MCF 10A (cell line): ENCODE measurements at regions of chrX and their contacts with region 1.

Region 1: GRCh38 chrX:19535476-19535875 is 20.2 kb upstream of the MAP3K15 start:
- DNase-seq: peak; percentile 34
- H3K4me3 Mint-ChIP-seq: no peak overlapping the region
- H3K27ac Mint-ChIP-seq: no peak overlapping the region
- H3K4me1 Mint-ChIP-seq: no peaks in the 10 kb centered on the region
- H3K27me3 Mint-ChIP-seq: no peaks in the 10 kb centered on the region
- CTCF ChIP-seq: peak; percentile 13

Region 2: DNA sequence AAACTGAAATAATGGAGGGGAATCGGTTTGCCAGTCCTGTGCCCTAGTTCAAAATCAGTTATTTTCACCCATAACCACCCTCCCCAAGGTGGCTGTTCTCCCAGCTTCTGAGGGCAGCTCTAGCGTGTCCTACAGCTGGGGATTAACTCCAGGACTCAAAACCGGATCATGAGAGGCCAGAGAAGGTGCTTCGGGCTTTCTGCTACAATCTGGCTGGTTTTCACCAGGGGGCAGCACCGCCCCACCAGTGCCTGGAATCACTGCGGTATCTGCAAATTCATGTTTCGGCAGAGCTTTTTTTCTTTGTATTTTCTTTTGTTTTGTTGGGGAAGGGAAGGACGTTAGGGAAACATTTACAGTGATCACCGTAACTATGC is 163.3 kb before region 1 on chrX:
- CTCF ChIA-PET with region 1: interaction called, 38 read pairs
- POLR2A ChIA-PET with region 1: interaction called, 4 read pairs
- intact Hi-C with region 1: loop called (anchors 1 kb)
- DNase-seq: peak; percentile 63
- H3K4me3 Mint-ChIP-seq: peak overlapping the region; percentile 79
- H3K27ac Mint-ChIP-seq: peak overlapping the region; percentile 35
- H3K4me1 Mint-ChIP-seq: no peaks in the 10 kb centered on the region
- H3K27me3 Mint-ChIP-seq: no peaks in the 10 kb centered on the region
- CTCF ChIP-seq: peak; percentile 59

Region 3: DNA sequence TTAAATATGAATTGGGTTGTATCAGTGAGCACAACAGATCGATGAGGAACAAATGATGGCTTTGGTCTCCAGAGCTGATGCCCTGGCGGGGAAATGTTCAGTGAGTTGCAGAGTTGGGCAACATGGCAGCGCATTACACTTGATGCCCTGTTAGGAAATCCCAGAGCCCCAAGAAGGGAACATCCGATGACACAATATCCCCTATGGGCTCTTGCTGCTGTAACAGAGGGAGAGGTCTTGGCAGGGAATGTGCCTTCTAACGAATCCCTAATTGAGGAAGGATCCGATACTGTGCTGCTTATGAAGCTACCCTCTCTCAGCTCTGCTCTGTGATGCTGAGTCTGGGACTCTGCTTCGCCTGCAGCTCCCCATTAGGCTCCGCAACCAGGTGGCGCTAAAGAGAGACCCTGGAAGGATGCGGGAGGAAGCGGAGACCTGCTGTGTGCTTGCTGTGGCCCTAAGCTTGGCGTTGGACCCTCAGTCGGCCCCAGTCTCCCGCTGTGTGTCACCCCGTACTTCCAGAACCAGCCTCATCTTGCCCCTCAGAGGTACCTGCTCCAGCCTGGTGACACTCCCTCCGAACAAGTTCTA is 152.8 kb before region 1 on chrX:
- CTCF ChIA-PET with region 1: interaction called, 14 read pairs
- POLR2A ChIA-PET with region 1: no interaction called
- intact Hi-C with region 1: no loop called
- DNase-seq: peak; percentile 66
- H3K4me3 Mint-ChIP-seq: no peak overlapping the region
- H3K27ac Mint-ChIP-seq: no peak overlapping the region
- H3K4me1 Mint-ChIP-seq: no peaks in the 10 kb centered on the region
- H3K27me3 Mint-ChIP-seq: no peaks in the 10 kb centered on the region
- CTCF ChIP-seq: peak; percentile 48

Region 4: GRCh38 chrX:19389227-19389845 is 146.1 kb before region 1 on chrX:
- CTCF ChIA-PET with region 1: interaction called, 13 read pairs
- POLR2A ChIA-PET with region 1: no interaction called
- intact Hi-C with region 1: no loop called
- DNase-seq: no peak
- H3K4me3 Mint-ChIP-seq: no peak overlapping the region
- H3K27ac Mint-ChIP-seq: no peak overlapping the region
- H3K4me1 Mint-ChIP-seq: no peaks in the 10 kb centered on the region
- H3K27me3 Mint-ChIP-seq: no peaks in the 10 kb centered on the region
- CTCF ChIP-seq: no peak